Gastrocnemius medialis (tissue), 4 donors: ENCODE measurements at regions of chr1 and their contacts with region 1.

Region 1: GRCh38 chr1:178997428-178997827 is 28.3 kb upstream of the FAM20B start:
- DNase-seq: no peak
- ATAC-seq: no peak
- H3K4me3 ChIP-seq: no peak overlapping the region
- H3K27ac ChIP-seq: no peak overlapping the region
- H3K4me1 ChIP-seq: no peaks in the 10 kb centered on the region
- H3K27me3 ChIP-seq: no peaks in the 10 kb centered on the region
- CTCF ChIP-seq: no peak
- POLR2A ChIP-seq: no peak

Region 2: GRCh38 chr1:178774263-178774662 is 223.2 kb before region 1 on chr1:
- in situ Hi-C with region 1: loop called (anchors 10 kb)
- intact Hi-C with region 1: loop called (anchors 1 kb)
- DNase-seq: no peak
- ATAC-seq: no peak
- H3K4me3 ChIP-seq: no peak overlapping the region
- H3K27ac ChIP-seq: no peak overlapping the region
- H3K4me1 ChIP-seq: no peaks in the 10 kb centered on the region
- H3K27me3 ChIP-seq: no peaks in the 10 kb centered on the region
- CTCF ChIP-seq: peak in 4 of 5 experiments; percentile 19 to 57 (median 34)
- POLR2A ChIP-seq: no peak

Region 3: GRCh38 chr1:178810585-178810984 is 186.8 kb before region 1 on chr1:
- in situ Hi-C with region 1: loop called in 2 of 4 experiments (anchors 5 kb)
- intact Hi-C with region 1: loop called (anchors 2 kb)
- DNase-seq: no peak
- ATAC-seq: no peak
- H3K4me3 ChIP-seq: no peak overlapping the region
- H3K27ac ChIP-seq: no peak overlapping the region
- H3K4me1 ChIP-seq: no peaks in the 10 kb centered on the region
- H3K27me3 ChIP-seq: no peaks in the 10 kb centered on the region
- CTCF ChIP-seq: no peak
- POLR2A ChIP-seq: no peak

Region 4: DNA sequence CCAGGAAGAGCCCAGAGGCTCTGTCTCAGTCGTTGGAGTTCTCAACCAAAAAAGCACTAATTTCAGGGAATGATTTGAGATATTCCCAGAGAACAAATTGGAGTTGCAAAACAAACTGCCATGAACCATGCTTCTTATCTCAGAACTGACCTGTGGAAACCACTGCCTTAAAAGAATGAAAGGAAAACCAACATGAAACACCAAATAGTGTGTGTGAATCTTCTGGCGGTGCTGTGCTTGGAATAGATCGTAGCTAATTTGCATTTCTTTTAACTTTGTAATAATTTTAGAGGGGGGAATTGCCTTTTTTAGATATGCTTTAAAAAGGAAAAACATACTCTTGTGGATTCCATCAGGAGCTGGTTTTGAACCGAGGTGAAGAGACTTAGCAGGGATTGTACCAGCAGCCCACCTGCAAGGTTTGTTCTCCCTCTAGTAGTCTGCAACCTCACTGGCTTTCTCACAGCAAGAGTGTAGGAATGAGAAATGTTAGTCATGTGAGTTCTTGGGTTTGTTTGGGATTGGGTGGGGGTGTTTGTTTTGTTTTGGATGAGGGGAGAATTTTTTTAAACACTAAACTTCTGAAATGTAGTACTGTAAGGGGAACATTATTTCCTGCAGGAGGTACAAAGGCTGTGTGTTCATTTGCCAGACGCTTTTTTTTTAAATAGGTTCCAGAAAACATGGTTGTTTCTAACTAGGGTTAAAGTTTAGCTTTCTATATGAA is 80.8 kb before region 1 on chr1:
- in situ Hi-C with region 1: no loop called
- intact Hi-C with region 1: no loop called
- DNase-seq: no peak
- ATAC-seq: no peak
- H3K4me3 ChIP-seq: no peak overlapping the region
- H3K27ac ChIP-seq: no peak overlapping the region
- H3K4me1 ChIP-seq: peaks cover 0 to 5% of the 10 kb centered on the region in 2 donors
- H3K27me3 ChIP-seq: no peaks in the 10 kb centered on the region
- CTCF ChIP-seq: no peak
- POLR2A ChIP-seq: no peak